ENCODE measurements at regions of chr3 and their contacts with region 1.

Region 1: GRCh38 chr3:62201438-62202035 is 171.8 kb downstream of the FEZF2 start:
- DNase-seq: peak; percentile 41
- H3K4me3 Mint-ChIP-seq: no peak overlapping the region
- H3K27ac Mint-ChIP-seq: no peak overlapping the region
- H3K4me1 Mint-ChIP-seq: no peaks in the 10 kb centered on the region
- H3K27me3 Mint-ChIP-seq: no peaks in the 10 kb centered on the region
- CTCF ChIP-seq: peak; percentile 53

Region 2: GRCh38 chr3:62211675-62212429 is 10.3 kb after region 1 on chr3:
- CTCF ChIA-PET with region 1: interaction called, 18 read pairs
- POLR2A ChIA-PET with region 1: no interaction called
- intact Hi-C with region 1: no loop called
- DNase-seq: no peak
- H3K4me3 Mint-ChIP-seq: no peak overlapping the region
- H3K27ac Mint-ChIP-seq: peak overlapping the region; percentile 32
- H3K4me1 Mint-ChIP-seq: no peaks in the 10 kb centered on the region
- H3K27me3 Mint-ChIP-seq: no peaks in the 10 kb centered on the region
- CTCF ChIP-seq: no peak

Region 3: GRCh38 chr3:62312201-62312600 is 110.7 kb after region 1 on chr3:
- CTCF ChIA-PET with region 1: interaction called, 12 read pairs
- POLR2A ChIA-PET with region 1: no interaction called
- intact Hi-C with region 1: no loop called
- DNase-seq: no peak
- H3K4me3 Mint-ChIP-seq: no peak overlapping the region
- H3K27ac Mint-ChIP-seq: no peak overlapping the region
- H3K4me1 Mint-ChIP-seq: no peaks in the 10 kb centered on the region
- H3K27me3 Mint-ChIP-seq: peaks cover 56% of the 10 kb centered on the region
- CTCF ChIP-seq: no peak

Region 4: DNA sequence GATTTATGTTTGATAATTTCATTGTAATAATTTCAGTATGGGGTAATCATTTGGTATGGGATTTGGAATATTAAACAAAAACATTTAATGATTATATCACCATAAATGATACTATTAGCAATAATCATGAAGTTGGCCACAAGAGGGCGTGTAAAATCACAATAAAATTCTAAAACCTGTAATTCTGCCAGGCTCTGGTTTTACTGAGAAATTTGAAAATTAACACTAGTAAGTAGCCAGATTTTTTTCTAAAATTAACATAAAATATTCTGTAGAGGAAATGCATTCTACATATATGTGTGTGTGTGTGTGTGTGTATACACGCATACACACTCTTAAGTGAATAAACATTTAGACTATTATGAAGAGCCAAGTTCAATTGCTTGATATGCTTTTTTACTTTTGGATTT is 131.3 kb after region 1 on chr3:
- CTCF ChIA-PET with region 1: interaction called, 13 read pairs
- POLR2A ChIA-PET with region 1: interaction called, 4 read pairs
- intact Hi-C with region 1: loop called (anchors 5 kb)
- DNase-seq: peak; percentile 30
- H3K4me3 Mint-ChIP-seq: no peak overlapping the region
- H3K27ac Mint-ChIP-seq: no peak overlapping the region
- H3K4me1 Mint-ChIP-seq: no peaks in the 10 kb centered on the region
- H3K27me3 Mint-ChIP-seq: peaks cover 83% of the 10 kb centered on the region
- CTCF ChIP-seq: peak; percentile 57

Region 5: DNA sequence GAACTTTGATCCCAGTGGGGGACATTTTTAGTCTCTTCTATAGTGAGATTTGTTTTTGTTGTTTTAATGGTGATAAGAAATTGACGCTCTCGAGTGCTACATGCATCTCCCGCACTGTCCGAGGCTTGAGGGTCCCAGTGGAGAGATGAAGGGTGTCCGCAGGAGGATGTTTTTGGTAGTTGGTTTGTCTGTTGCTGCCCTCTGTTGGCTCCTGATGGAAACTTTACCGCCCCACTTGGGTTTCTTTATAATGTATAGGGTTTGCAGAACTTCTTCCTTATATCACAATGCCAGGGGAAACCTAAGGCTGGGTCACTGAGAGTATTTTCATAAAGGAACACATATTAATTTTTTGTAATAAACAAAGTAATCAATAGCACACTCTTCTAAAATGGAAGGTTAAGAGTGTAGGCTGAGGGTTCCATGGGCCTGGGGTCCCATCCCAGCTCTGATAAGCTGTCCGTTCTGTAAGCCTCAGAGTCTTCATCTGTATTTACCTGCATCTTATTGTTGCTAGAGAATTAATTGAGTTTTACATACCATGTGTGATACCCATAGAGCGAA is 357.1 kb after region 1 on chr3:
- CTCF ChIA-PET with region 1: interaction called, 92 read pairs
- POLR2A ChIA-PET with region 1: no interaction called
- intact Hi-C with region 1: no loop called
- DNase-seq: peak; percentile 48
- H3K4me3 Mint-ChIP-seq: no peak overlapping the region
- H3K27ac Mint-ChIP-seq: no peak overlapping the region
- H3K4me1 Mint-ChIP-seq: peaks cover 13% of the 10 kb centered on the region
- H3K27me3 Mint-ChIP-seq: no peaks in the 10 kb centered on the region
- CTCF ChIP-seq: peak; percentile 45

Measured in MCF 10A (cell line).